ENCODE measurements at regions of chr10 and their contacts with region 1.

Region 1: DNA sequence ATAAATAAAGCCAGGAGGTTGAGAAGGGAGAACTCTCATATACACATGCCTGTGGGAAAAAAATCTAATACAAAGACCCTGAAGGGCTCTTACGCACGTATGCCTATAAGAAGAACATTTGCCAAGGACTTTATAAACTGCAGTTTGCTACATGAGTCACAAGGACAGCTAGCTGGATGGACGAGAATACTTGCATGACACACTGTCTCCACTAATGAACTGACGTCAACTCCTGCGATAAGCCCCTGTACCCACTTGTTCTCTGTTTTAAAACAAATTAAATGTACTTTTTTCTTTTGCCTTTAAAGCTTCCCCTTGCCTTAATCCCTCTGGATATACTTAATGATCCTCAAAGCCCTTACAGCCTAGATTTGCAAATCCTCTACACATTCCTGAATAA is 374.6 kb upstream of the GHITM start:
- DNase-seq: no peak
- ATAC-seq: no peak
- H3K4me3 ChIP-seq: no peak overlapping the region
- H3K27ac ChIP-seq: no peak overlapping the region
- H3K4me1 ChIP-seq: no peaks in the 10 kb centered on the region
- H3K27me3 ChIP-seq: no peaks in the 10 kb centered on the region
- CTCF ChIP-seq: no peak
- POLR2A ChIP-seq: no peak
- RAD21 ChIP-seq: no peak

Region 2: GRCh38 chr10:82529062-82529461 is 1235.6 kb before region 1 on chr10:
- CTCF ChIA-PET with region 1: no interaction called
- POLR2A ChIA-PET with region 1: no interaction called
- dilution Hi-C with region 1: no loop called
- in situ Hi-C with region 1: no loop called
- intact Hi-C with region 1: no loop called
- DNase-seq: no peak
- ATAC-seq: no peak
- H3K4me3 ChIP-seq: no peak overlapping the region
- H3K27ac ChIP-seq: no peak overlapping the region
- H3K4me1 ChIP-seq: no peaks in the 10 kb centered on the region
- H3K27me3 ChIP-seq: no peaks in the 10 kb centered on the region
- CTCF ChIP-seq: no peak
- POLR2A ChIP-seq: no peak
- RAD21 ChIP-seq: no peak

Region 3: DNA sequence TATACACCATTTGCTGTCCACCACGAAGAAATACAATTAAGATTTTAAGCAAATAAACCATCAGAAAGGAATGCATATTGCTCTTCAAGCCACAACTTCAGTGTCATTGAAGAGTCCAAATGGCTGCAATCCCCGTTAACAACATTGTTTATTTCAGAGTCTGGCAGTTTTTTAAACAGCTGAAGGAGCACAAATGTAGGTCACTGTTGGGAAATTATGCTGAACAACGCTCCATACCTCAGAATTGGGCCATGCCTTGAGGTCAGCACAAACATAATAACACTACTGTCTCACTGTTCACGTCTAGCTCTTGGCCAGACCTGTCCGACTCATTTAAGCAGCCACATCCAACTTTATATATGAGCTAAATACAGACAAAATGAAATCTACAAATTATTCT is 79.2 kb before region 1 on chr10:
- CTCF ChIA-PET with region 1: no interaction called
- POLR2A ChIA-PET with region 1: no interaction called
- dilution Hi-C with region 1: no loop called
- in situ Hi-C with region 1: no loop called
- intact Hi-C with region 1: loop called (anchors 2 kb)
- DNase-seq: no peak
- ATAC-seq: no peak
- H3K4me3 ChIP-seq: no peak overlapping the region
- H3K27ac ChIP-seq: no peak overlapping the region
- H3K4me1 ChIP-seq: no peaks in the 10 kb centered on the region
- H3K27me3 ChIP-seq: no peaks in the 10 kb centered on the region
- CTCF ChIP-seq: no peak
- POLR2A ChIP-seq: no peak
- RAD21 ChIP-seq: no peak

Region 4: GRCh38 chr10:83736008-83736407 is 28.7 kb before region 1 on chr10:
- CTCF ChIA-PET with region 1: no interaction called
- POLR2A ChIA-PET with region 1: no interaction called
- dilution Hi-C with region 1: no loop called
- in situ Hi-C with region 1: no loop called
- intact Hi-C with region 1: no loop called
- DNase-seq: no peak
- ATAC-seq: no peak
- H3K4me3 ChIP-seq: no peak overlapping the region
- H3K27ac ChIP-seq: no peak overlapping the region
- H3K4me1 ChIP-seq: no peaks in the 10 kb centered on the region
- H3K27me3 ChIP-seq: no peaks in the 10 kb centered on the region
- CTCF ChIP-seq: no peak
- POLR2A ChIP-seq: no peak
- RAD21 ChIP-seq: no peak

Measured in IMR-90 (cell line).